Gastrocnemius medialis (tissue), 4 donors: ENCODE measurements at regions of chr16 and their contacts with region 1.

Region 1: DNA sequence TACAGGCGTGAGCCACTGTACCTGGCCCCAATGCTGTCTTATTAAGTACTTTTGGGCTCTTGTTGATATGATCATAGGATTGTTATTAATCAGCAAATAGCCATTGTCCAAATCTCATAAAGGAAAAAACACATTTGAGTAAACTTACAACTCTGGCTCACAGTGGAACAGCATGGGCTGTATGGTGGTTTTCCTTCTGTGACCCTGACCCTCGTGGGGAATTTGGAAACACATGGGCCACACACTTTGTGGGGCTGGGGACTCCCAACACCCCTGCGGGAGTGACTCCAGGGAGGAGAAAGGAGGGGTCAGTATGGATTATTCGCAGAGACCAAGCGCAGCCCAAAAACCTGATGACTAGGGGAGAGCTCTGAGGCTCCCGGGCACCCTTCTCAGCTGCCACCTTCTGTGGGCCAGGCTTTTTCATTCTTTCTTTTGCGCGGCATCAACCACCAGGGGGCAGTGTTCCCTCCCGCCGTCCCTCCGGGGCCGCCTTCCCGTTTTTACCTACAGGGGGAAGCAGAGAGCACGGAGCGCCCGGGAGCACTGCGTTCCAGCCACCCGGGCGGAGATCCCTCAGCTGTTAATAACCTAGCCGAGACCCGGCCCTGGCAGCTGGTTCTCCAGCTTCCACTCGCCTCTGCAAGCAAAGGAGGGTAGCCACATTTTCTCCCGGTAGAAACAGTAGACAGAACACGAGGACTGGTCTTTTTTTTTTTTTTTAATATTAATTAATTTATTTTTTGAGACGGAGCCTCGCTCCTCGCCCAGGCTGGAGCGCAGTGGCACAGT is 9.7 kb downstream of the TSNAXIP1 start:
- DNase-seq: peak; percentile 69 to 81
- ATAC-seq: peak; percentile 91 to 96
- H3K4me3 ChIP-seq: no peak overlapping the region
- H3K27ac ChIP-seq: peak overlapping the region; percentile 49 to 78 (median 59)
- H3K4me1 ChIP-seq: no peaks in the 10 kb centered on the region
- H3K27me3 ChIP-seq: no peaks in the 10 kb centered on the region
- CTCF ChIP-seq: peak; percentile 99 to 100 (median 100)
- POLR2A ChIP-seq: no peak

Region 2: DNA sequence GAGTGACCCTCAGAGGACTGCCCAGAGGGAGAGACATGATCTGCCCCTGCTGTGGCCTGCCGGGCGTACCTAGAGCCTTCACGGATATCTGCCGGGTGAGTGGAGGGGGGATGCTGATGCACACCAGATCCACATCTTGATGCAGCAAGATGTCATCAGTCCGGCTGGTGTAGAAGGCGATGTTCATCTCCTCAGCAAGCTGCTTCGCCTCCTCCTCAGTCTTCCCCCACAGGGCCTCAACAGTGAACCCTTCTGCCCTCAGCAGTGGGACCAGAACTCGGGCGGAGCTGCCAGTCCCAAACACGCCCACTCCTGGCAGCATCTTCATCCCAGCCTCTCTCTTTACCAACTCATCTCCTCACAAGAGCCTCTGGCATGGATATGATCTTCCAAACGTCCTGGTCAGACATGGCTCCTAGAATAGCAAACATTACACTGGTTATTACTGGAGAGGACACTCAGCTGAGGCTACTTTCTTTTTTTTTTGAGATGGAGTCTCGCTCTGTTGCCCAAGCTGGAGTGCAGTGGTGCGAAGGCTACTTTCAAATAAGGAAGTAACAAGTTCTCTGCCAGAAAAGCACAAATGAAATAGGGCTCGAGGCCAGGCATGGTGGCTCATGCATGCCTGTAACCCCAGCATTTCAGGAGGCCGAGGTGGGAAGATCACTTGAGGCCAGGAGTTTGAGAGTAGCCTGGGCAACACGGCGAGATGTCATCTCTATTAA is 130.9 kb before region 1 on chr16:
- in situ Hi-C with region 1: no loop called
- intact Hi-C with region 1: no loop called
- DNase-seq: no peak
- ATAC-seq: no peak
- H3K4me3 ChIP-seq: no peak overlapping the region
- H3K27ac ChIP-seq: peak overlapping the region; percentile 18 to 49 (median 34)
- H3K4me1 ChIP-seq: peaks cover 0 to 5% of the 10 kb centered on the region in 2 donors
- H3K27me3 ChIP-seq: no peaks in the 10 kb centered on the region
- CTCF ChIP-seq: no peak
- POLR2A ChIP-seq: no peak

Region 3: GRCh38 chr16:67726106-67727034 is 90.1 kb before region 1 on chr16:
- in situ Hi-C with region 1: no loop called
- intact Hi-C with region 1: no loop called
- DNase-seq: no peak
- ATAC-seq: peak in 1 of 2 donors; percentile 24
- H3K4me3 ChIP-seq: no peak overlapping the region
- H3K27ac ChIP-seq: no peak overlapping the region
- H3K4me1 ChIP-seq: no peaks in the 10 kb centered on the region
- H3K27me3 ChIP-seq: no peaks in the 10 kb centered on the region
- CTCF ChIP-seq: no peak
- POLR2A ChIP-seq: no peak

Region 4: DNA sequence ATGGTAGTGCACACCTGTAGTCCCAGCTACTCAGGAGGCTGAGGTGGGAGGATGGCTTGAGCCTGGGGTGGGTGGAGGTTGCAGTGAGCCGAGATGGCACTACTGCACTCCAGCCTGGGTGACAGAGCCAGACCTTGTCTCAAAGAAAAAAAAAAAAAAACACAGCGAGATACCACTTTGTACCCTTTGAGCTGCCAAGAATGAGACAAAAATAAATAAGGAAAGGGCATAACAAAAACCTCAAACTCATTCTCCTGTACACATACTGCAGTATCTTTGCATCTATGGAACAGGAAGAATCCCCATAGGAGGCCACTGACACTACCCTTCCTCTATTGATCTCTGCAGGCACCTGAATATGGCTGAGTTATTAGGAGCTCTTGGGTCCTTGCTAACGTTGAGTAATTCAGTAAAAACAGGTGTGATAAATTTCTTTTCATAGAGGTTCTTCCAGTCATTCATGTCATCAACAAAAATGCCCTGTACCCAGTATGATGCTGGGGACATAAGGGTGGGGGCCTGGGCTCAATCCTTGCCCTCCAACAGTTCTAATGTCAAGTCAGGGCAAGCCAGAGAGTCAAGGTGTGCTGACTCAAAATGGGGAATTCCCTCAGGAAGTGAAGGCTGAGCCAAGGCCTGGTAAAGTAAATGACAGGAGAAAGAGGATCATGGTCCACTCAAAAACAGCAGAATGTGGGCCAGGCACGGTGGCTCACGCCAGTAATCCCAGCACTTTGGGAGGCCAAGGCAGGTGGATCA is 37.0 kb before region 1 on chr16:
- in situ Hi-C with region 1: no loop called
- intact Hi-C with region 1: loop called (anchors 1 kb)
- DNase-seq: no peak
- ATAC-seq: peak; percentile 39 to 40
- H3K4me3 ChIP-seq: no peak overlapping the region
- H3K27ac ChIP-seq: peak overlapping the region; percentile 33 to 82 (median 69)
- H3K4me1 ChIP-seq: peaks cover 42 to 50% of the 10 kb centered on the region in 2 donors
- H3K27me3 ChIP-seq: no peaks in the 10 kb centered on the region
- CTCF ChIP-seq: no peak
- POLR2A ChIP-seq: no peak

Region 5: GRCh38 chr16:67872786-67873537 is 56.5 kb after region 1 on chr16 and contains the start of gene EDC4:
- in situ Hi-C with region 1: no loop called
- intact Hi-C with region 1: loop called (anchors 2 kb)
- DNase-seq: peak; percentile 68 to 85
- ATAC-seq: peak; percentile 86 to 89
- H3K4me3 ChIP-seq: peak within 1 kb of the TSS; percentile 71 to 92 (median 84)
- H3K27ac ChIP-seq: peak within 1 kb of the TSS; percentile 85 to 94 (median 89)
- H3K4me1 ChIP-seq: peaks cover 28 to 31% of the 10 kb centered on the region in 2 donors
- H3K27me3 ChIP-seq: no peaks in the 10 kb centered on the region
- CTCF ChIP-seq: no peak
- POLR2A ChIP-seq: peak; percentile 73 to 88
- total RNA-seq, gene EDC4: 27.5 to 58.9 (median 48.5) TPM

Region 6: DNA sequence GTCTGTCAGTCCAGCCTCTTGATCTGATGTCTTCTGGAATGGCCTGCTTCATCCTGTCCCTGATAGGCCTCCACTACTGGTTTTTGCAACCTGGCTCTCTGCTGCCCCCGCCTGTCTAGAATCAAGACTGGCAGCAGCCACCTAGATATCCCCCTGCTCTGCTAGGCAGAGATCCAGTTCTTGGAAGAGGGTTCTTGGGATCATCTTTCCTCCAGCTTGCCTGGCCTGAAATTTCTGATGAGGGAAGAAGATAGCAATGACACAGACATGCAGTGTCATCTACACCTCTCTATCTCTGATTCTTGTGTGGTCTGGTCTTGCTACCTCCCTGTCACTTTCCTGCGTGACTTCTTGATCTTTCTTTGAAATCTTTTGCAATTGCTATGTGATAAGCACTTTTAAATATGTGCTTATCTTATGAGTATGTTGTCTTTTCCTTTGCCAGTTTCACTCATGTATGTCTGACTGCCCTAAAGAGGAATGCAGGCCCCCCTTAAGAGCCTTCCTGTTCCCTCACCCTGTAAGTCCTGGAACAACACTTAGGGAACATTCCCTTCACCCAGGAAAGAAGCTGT is 248.4 kb after region 1 on chr16:
- in situ Hi-C with region 1: no loop called
- intact Hi-C with region 1: loop called (anchors 5 kb)
- DNase-seq: peak; percentile 83 to 91
- ATAC-seq: peak; percentile 90
- H3K4me3 ChIP-seq: no peak overlapping the region
- H3K27ac ChIP-seq: peak overlapping the region; percentile 85 to 92 (median 89)
- H3K4me1 ChIP-seq: peaks cover 40 to 50% of the 10 kb centered on the region in 2 donors
- H3K27me3 ChIP-seq: no peaks in the 10 kb centered on the region
- CTCF ChIP-seq: peak; percentile 84 to 86 (median 85)
- POLR2A ChIP-seq: no peak

Region 7: DNA sequence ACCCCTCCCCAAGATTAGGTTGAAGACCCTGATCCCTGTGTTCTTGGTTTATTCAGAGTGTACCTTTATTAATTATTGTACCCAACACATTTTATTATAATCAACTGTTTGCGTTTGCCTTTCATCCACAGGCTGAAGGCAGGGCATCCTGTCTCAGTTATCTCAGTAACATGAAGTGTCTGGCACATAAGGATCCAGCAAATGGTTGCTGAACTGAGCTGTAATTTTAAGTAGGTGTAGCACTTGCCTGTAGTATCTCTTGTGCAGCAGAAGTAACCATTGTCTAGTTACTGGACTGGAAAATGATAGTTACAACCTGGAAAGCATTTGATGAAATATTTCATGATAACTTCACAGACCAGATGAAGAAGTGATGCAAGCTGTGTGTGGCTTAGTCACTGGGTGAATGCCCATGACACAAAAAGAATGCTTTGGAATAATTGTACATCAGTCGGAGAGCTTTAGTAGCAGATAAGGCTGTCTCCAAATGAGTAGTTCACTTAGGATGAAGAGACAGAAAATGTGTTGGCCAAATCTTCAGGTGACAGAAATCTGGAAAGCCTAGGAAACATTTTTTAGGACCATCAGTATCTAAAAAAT is 362.9 kb after region 1 on chr16:
- in situ Hi-C with region 1: no loop called
- intact Hi-C with region 1: no loop called
- DNase-seq: no peak
- ATAC-seq: no peak
- H3K4me3 ChIP-seq: no peak overlapping the region
- H3K27ac ChIP-seq: peak overlapping the region; percentile 20 to 60 (median 45)
- H3K4me1 ChIP-seq: peaks cover 20 to 30% of the 10 kb centered on the region in 2 donors
- H3K27me3 ChIP-seq: no peaks in the 10 kb centered on the region
- CTCF ChIP-seq: no peak
- POLR2A ChIP-seq: no peak